ENCODE measurements at regions of chr9 and their contacts with region 1.

Region 1: GRCh38 chr9:6703898-6704639 is 53.7 kb upstream of the KDM4C start:
- DNase-seq: peak; percentile 93
- ATAC-seq: peak; percentile 88
- H3K4me3 Mint-ChIP-seq: peak overlapping the region; percentile 75
- H3K27ac Mint-ChIP-seq: peak overlapping the region; percentile 77
- H3K4me1 Mint-ChIP-seq: peaks cover 14% of the 10 kb centered on the region
- H3K27me3 Mint-ChIP-seq: no peaks in the 10 kb centered on the region

Region 2: DNA sequence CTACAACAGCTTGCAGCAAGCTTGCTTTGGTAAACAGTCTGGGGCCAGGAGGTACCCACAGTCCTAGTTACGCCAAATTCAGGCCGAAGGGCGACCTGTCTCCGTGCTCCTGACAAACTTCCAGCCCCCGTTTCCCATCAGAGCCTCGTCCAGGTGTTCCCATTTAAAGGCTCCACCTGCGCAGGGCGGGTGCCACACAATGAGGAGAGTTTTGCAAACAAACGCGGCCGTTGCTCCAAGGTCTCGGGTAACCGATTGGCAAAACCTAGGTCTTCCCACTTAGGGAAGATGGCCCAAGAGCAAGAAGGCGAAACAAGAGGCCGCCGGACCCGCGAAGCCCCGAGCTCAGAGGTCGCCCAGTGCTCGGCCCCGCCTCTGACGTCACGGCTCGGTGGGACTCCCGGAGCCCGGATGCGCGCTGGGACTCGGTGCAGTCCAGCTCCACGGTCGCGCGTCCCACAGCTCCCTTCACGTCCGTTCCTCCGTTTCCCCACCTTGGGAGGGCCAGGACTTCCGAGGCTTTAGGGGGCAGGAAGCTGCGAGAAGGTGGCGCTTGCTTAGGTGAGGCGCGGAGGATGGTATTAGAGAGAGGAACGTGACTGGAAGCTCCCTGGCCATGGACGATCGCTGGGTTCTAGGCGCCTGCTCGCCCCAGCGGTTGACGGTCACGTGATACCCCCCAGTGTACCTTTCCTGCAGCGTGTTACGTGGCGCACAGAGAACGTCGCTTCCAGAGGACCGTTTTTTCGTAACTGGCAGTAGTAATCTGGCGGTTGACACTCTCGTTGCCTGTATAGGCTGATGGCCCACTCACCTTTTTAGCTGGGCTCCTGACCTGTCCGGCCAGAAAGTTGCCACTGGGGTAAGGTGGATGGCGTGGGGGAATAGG is 11.9 kb after region 1 on chr9:
- CTCF ChIA-PET with region 1: interaction called, 3 read pairs
- POLR2A ChIA-PET with region 1: no interaction called
- intact Hi-C with region 1: loop called in 1 of 2 experiments (anchors 1 kb)
- DNase-seq: peak; percentile 83
- ATAC-seq: peak; percentile 91
- H3K4me3 Mint-ChIP-seq: peak overlapping the region; percentile 76
- H3K27ac Mint-ChIP-seq: peak overlapping the region; percentile 86
- H3K4me1 Mint-ChIP-seq: peaks cover 6% of the 10 kb centered on the region
- H3K27me3 Mint-ChIP-seq: no peaks in the 10 kb centered on the region

Measured in activated CD4-positive, alpha-beta T cell treated with anti-CD3 and anti-CD28 coated beads for 36 hours (primary cell).